SK-N-SH (cell line): ENCODE measurements at regions of chr21 and their contacts with region 1.

Region 1: DNA sequence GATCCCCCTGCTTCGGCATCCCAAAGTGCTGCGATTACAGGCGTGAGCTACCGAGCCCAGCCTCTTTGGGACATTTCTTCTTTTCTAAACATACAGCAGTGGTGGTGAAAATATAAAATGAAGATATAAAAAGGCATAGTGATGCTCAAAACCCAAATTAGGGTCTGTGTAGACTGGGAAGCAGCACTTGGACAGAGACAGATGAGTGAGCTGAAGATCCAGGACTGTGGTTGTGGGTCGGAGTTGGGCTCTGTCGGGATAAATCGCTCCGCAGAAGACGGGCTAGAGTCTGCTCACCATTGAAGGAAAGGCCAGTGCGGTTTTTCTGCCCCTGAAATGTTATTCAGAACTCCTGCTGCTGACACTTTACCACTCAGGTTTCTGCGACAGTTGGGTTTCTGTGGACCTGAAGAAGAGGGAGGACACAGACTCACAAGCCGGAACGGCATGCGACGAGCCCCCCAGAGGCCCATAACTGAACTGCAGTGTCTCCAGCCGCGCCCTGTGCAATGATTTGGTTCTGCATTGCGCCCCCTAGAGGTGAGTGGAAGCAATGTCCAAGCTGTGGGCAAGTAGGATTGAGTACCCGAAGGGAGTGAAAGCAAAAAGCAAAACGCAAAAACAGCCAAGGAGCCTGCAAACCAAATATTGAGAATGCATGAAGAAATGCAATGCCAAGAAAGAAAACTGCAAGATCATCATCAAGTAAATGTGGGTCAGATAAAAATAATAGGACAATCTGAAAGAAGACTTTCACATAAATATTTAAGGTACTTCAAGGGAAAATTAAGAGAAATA is 66.6 kb downstream of the GABPA start:
- DNase-seq: peak; percentile 79
- H3K4me3 ChIP-seq: peak overlapping the region in 1 of 2 experiments; percentile 63; a peak in 1 of 4 replicates
- H3K27ac ChIP-seq: no peak overlapping the region
- H3K4me1 ChIP-seq: no peaks in the 10 kb centered on the region
- H3K27me3 ChIP-seq: no peaks in the 10 kb centered on the region; the same call in 1 of the 2 replicates
- CTCF ChIP-seq: peak; percentile 99
- EP300 ChIP-seq: no peak
- RAD21 ChIP-seq: peak; percentile 65

Region 2: DNA sequence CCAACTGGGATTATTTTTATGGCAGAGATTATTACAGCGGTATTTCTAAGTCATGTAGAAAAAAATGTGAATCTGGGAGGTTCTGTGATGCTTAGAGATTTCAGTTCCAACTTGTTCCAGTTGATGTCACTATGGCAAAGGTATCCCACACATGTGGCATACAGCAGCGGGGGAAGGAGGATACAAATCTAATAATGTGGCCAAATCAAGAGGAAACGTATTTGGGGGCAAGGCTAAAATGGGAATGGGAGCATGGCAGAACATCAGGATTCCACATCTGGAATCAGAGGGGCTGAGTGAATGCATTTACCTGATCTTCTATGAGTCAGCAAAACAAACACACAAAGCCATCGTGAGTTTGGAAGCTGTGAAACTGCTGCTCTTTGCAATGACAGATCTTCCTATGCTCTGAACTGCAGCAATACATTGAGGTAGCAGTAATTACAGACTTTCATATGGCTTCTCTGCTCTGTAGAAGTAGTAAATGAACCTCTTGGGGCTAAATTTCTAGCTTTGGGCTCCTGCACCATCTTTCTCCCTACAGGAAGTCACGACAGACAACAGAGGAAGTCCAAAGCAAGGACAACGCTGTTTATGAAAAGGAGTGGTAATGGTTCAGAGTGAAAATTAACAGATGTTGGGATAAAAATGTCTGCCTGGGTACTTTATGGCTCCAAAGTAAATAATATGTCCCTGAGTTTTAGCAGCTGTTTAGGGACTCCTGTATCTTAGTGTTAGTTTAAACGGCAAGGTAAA is 11.1 kb before region 1 on chr21:
- CTCF ChIA-PET with region 1: interaction called, 29 read pairs
- POLR2A ChIA-PET with region 1: no interaction called
- DNase-seq: peak; percentile 52
- H3K4me3 ChIP-seq: peak overlapping the region; percentile 34 to 50; a peak in 3 of 4 replicates
- H3K27ac ChIP-seq: peak overlapping the region in 1 of 2 experiments; percentile 70; a peak in 2 of 4 replicates
- H3K4me1 ChIP-seq: peaks cover 5% of the 10 kb centered on the region in 2 experiments; a peak in 2 of 4 replicates
- H3K27me3 ChIP-seq: no peaks in the 10 kb centered on the region
- CTCF ChIP-seq: peak; percentile 55
- EP300 ChIP-seq: no peak
- RAD21 ChIP-seq: peak; percentile 75

Region 3: GRCh38 chr21:25818121-25818520 is 16.7 kb after region 1 on chr21:
- CTCF ChIA-PET with region 1: interaction called, 30 read pairs
- POLR2A ChIA-PET with region 1: no interaction called
- DNase-seq: no peak
- H3K4me3 ChIP-seq: no peak overlapping the region
- H3K27ac ChIP-seq: no peak overlapping the region
- H3K4me1 ChIP-seq: peaks cover 0 to 3% of the 10 kb centered on the region in 2 experiments; a peak in 1 of 4 replicates
- H3K27me3 ChIP-seq: no peaks in the 10 kb centered on the region
- CTCF ChIP-seq: no peak
- EP300 ChIP-seq: no peak
- RAD21 ChIP-seq: no peak